ENCODE measurements at regions of chr11 and their contacts with region 1.

Region 1: DNA sequence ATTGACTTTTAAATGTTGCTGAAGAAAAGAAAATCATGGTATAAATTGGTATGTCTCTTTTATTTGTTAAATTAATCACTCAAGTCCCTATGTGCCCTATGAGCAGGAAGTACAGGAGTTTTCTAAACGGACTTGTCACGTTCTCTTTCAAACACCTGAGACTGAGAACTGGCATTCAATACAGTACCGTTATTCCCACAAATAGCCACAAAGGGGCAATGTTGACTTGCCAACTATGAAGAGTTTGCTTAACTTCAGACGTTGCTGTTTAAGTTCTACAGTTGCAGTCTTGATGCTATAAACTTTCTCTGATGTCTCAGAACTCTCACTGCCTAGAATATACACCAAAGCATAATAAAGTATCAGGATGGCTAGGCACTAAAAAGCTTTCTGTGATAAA is 7.6 kb downstream of the OR56A1 start:
- DNase-seq: no peak
- H3K4me3 ChIP-seq: no peak overlapping the region
- H3K27ac ChIP-seq: no peak overlapping the region
- H3K4me1 ChIP-seq: no peaks in the 10 kb centered on the region
- H3K27me3 ChIP-seq: no peaks in the 10 kb centered on the region
- CTCF ChIP-seq: peak; percentile 41

Region 2: DNA sequence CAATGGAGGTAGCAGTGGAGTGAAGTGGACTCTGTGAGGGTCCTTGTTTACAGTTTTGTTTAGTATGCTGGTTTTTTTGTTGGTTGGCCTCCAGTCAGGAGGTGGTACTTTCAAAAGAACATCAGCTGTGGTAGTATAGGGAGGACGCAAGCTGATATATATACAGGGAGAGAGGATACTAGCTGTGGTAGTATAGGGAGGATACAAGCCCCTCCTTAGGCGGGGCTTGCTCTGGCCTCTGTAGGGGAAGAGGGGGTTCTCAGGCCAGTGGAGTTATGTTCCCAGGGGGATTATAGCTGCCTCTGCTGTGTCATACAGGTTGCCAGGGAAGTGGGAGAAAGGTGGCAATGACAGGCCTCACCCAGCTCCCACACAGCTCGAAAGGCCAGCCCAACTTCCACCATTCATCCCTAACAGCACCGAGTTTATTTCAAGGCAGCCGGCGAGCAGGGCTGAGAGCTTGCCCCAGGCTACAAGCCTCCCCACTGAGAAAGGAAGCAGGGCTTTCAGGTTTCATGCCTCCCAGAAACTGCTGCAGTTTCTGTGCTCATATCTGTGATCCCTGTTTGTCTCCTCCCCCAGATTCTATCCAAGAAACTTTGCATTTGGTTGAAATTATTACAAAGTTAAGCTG is 191.6 kb before region 1 on chr11:
- intact Hi-C with region 1: no loop called
- DNase-seq: no peak
- H3K4me3 ChIP-seq: no peak overlapping the region
- H3K27ac ChIP-seq: no peak overlapping the region
- H3K4me1 ChIP-seq: no peaks in the 10 kb centered on the region
- H3K27me3 ChIP-seq: no peaks in the 10 kb centered on the region
- CTCF ChIP-seq: no peak

Region 3: GRCh38 chr11:5899519-5899918 is 123.4 kb before region 1 on chr11:
- intact Hi-C with region 1: no loop called
- DNase-seq: no peak
- H3K4me3 ChIP-seq: no peak overlapping the region
- H3K27ac ChIP-seq: no peak overlapping the region
- H3K4me1 ChIP-seq: no peaks in the 10 kb centered on the region
- H3K27me3 ChIP-seq: no peaks in the 10 kb centered on the region
- CTCF ChIP-seq: no peak

Region 4: DNA sequence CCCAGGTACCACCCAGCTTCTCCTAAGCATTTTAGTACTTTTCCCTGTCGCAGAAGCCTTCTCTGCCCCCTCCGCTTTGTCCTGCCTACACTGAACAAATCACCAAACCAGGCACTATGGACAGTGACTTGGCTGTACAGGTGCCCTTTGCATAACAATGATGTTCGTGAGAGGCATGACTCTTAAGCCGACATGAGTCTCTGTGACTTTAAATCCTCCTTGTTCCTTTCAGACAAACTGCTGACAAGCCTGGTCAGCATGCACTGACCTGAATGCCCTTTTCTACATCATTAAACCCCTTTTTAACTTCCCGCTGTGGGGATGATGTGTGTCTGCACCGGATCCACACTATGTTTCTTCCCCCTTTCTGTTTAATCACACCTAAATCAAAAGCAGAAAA is 280.7 kb after region 1 on chr11:
- intact Hi-C with region 1: loop called (anchors 5 kb)
- DNase-seq: no peak
- H3K4me3 ChIP-seq: no peak overlapping the region
- H3K27ac ChIP-seq: no peak overlapping the region
- H3K4me1 ChIP-seq: no peaks in the 10 kb centered on the region
- H3K27me3 ChIP-seq: no peaks in the 10 kb centered on the region
- CTCF ChIP-seq: no peak

Region 5: GRCh38 chr11:6315811-6316425 is 293.0 kb after region 1 on chr11:
- intact Hi-C with region 1: loop called (anchors 5 kb)
- DNase-seq: peak; percentile 53
- H3K4me3 ChIP-seq: no peak overlapping the region
- H3K27ac ChIP-seq: no peak overlapping the region
- H3K4me1 ChIP-seq: no peaks in the 10 kb centered on the region
- H3K27me3 ChIP-seq: no peaks in the 10 kb centered on the region
- CTCF ChIP-seq: peak; percentile 67

Measured in colonic mucosa (tissue), 4 donors.